ENCODE measurements at regions of chr6 and their contacts with region 1.

Region 1: GRCh38 chr6:44074439-44075136 is 52.7 kb downstream of the MRPL14 start:
- DNase-seq: peak; percentile 27 to 84 (median 67)
- ATAC-seq: peak; percentile 50
- H3K4me3 ChIP-seq: peak overlapping the region in 1 of 2 experiments; percentile 44
- H3K4me3 Mint-ChIP-seq: peak overlapping the region; percentile 98
- H3K27ac ChIP-seq: no peak overlapping the region
- H3K27ac Mint-ChIP-seq: no peak overlapping the region
- H3K4me1 ChIP-seq: peaks cover 19% of the 10 kb centered on the region
- H3K4me1 Mint-ChIP-seq: peaks cover 19% of the 10 kb centered on the region
- H3K27me3 ChIP-seq: peaks cover 0 to 3% of the 10 kb centered on the region in 2 experiments
- H3K27me3 Mint-ChIP-seq: peaks cover 25% of the 10 kb centered on the region
- CTCF ChIP-seq: peak; percentile 80

Region 2: DNA sequence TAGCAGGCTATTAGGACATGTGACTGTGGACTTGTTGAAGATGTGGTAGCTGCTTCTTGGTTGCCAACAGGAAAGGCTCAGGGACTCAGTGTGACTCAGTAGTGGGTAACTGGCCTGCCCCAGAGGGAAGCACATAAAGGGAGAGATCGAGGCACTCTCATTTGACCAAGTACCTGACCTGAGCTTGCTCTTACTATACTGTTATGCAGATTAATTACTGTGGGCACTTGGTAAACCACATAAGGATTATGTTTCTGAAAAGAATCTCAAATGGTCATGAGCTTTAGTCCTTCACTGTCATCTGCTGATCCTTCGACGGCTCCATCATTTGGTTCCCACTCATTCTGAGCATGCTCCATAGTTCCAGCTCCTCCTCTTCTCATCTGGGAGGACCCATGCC is 1243.4 kb before region 1 on chr6:
- CTCF ChIA-PET with region 1: no interaction called
- POLR2A ChIA-PET with region 1: no interaction called
- intact Hi-C with region 1: no loop called
- DNase-seq: no peak
- ATAC-seq: no peak
- H3K4me3 ChIP-seq: no peak overlapping the region
- H3K4me3 Mint-ChIP-seq: no peak overlapping the region
- H3K27ac ChIP-seq: no peak overlapping the region
- H3K27ac Mint-ChIP-seq: no peak overlapping the region
- H3K4me1 ChIP-seq: no peaks in the 10 kb centered on the region
- H3K4me1 Mint-ChIP-seq: peaks cover 23% of the 10 kb centered on the region
- H3K27me3 ChIP-seq: no peaks in the 10 kb centered on the region
- H3K27me3 Mint-ChIP-seq: no peaks in the 10 kb centered on the region
- CTCF ChIP-seq: no peak

Region 3: GRCh38 chr6:43667245-43668150 is 407.1 kb before region 1 on chr6:
- CTCF ChIA-PET with region 1: interaction called, 74 read pairs
- POLR2A ChIA-PET with region 1: no interaction called
- intact Hi-C with region 1: loop called in 1 of 2 experiments (anchors 1 kb)
- DNase-seq: peak; percentile 72 to 85 (median 77)
- ATAC-seq: peak; percentile 83
- H3K4me3 ChIP-seq: no peak overlapping the region
- H3K4me3 Mint-ChIP-seq: peak overlapping the region; percentile 63
- H3K27ac ChIP-seq: no peak overlapping the region
- H3K27ac Mint-ChIP-seq: peak overlapping the region; percentile 81
- H3K4me1 ChIP-seq: peaks cover 14% of the 10 kb centered on the region
- H3K4me1 Mint-ChIP-seq: peaks cover 18% of the 10 kb centered on the region
- H3K27me3 ChIP-seq: no peaks in the 10 kb centered on the region
- H3K27me3 Mint-ChIP-seq: no peaks in the 10 kb centered on the region
- CTCF ChIP-seq: peak; percentile 96

Region 4: DNA sequence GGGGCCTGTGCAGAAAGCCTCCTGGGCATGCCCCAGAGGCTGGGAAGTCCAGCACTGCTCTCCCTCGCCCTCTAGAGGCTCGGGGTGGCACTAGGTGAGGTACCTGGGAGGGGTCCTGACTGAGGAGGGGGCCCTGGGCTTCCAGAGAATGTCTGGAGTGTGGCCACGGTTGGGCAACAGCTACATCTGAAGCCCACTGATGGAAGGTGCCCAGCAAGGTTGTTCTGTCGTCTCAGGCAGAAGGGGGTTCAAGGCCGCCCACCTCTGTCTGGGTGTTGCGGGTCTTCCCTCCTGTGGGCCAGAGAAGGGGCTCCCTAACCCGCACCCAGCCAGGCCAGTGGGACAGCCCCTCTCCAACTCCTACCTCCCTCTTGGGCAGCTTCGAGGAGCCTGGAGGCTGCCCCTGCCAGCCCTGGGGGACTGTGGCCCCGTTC is 316.0 kb before region 1 on chr6:
- CTCF ChIA-PET with region 1: interaction called, 22 read pairs
- POLR2A ChIA-PET with region 1: interaction called, 3 read pairs
- intact Hi-C with region 1: no loop called
- DNase-seq: peak in 2 of 9 experiments; percentile 16 to 27
- ATAC-seq: peak; percentile 48
- H3K4me3 ChIP-seq: no peak overlapping the region
- H3K4me3 Mint-ChIP-seq: no peak overlapping the region
- H3K27ac ChIP-seq: no peak overlapping the region
- H3K27ac Mint-ChIP-seq: no peak overlapping the region
- H3K4me1 ChIP-seq: no peaks in the 10 kb centered on the region
- H3K4me1 Mint-ChIP-seq: no peaks in the 10 kb centered on the region
- H3K27me3 ChIP-seq: no peaks in the 10 kb centered on the region
- H3K27me3 Mint-ChIP-seq: no peaks in the 10 kb centered on the region
- CTCF ChIP-seq: peak; percentile 32

Region 5: DNA sequence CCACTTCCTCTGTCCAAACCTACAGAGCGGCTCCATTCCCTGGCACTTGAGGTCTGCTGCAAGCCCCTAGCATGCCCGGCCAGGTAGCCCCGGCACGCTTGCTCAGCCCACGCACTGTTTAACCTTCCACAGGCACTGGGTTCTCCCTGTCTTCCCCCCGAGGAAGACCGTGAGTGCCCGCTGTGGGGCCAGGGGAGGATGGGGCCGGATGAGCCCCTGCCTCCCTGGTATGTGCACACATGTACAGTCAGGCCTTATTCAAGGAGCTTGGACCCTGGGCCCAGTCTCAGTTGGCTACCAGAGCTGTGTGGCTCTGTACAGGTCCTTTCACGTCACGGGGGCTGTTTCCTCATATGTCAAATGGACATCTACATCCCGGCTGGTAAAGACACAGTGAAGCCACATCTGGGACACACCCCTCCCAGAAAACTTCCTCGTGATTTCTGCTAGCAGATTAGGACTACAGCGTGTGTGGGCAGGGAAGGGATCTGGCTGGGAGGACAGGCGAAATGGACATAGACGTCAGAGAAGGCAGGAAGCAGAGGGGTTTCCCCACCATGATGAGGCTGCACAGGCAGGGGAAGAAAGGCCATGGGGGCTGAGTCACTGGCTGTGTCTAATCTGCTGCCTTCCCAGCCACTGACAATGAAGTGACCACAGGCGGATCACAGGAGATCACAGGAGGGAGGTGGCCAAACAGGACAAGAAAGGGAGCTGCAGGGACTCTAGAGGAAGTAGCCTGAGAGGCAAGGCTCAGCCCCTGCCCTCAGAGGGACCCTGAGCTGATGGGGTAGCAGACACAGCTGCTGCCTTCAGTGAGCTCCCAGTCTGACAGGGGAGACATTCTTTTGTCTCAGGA is 10.3 kb before region 1 on chr6:
- CTCF ChIA-PET with region 1: interaction called, 14 read pairs
- POLR2A ChIA-PET with region 1: interaction called, 3 read pairs
- intact Hi-C with region 1: no loop called
- DNase-seq: peak in 1 of 9 experiments; percentile 49
- ATAC-seq: no peak
- H3K4me3 ChIP-seq: no peak overlapping the region
- H3K4me3 Mint-ChIP-seq: no peak overlapping the region
- H3K27ac ChIP-seq: no peak overlapping the region
- H3K27ac Mint-ChIP-seq: no peak overlapping the region
- H3K4me1 ChIP-seq: no peaks in the 10 kb centered on the region
- H3K4me1 Mint-ChIP-seq: no peaks in the 10 kb centered on the region
- H3K27me3 ChIP-seq: no peaks in the 10 kb centered on the region
- H3K27me3 Mint-ChIP-seq: peaks cover 8% of the 10 kb centered on the region
- CTCF ChIP-seq: no peak

Measured in CD8-positive, alpha-beta T cell (primary cell).